ENCODE measurements at regions of chr6 and their contacts with region 1.

Region 1: GRCh38 chr6:85354761-85355618 is 94.9 kb upstream of the NT5E start:
- DNase-seq: peak; percentile 78
- H3K4me3 ChIP-seq: no peak overlapping the region
- H3K27ac ChIP-seq: no peak overlapping the region
- H3K4me1 ChIP-seq: no peaks in the 10 kb centered on the region
- H3K27me3 ChIP-seq: no peaks in the 10 kb centered on the region
- CTCF ChIP-seq: peak; percentile 80 to 92
- POLR2A ChIP-seq: no peak

Region 2: DNA sequence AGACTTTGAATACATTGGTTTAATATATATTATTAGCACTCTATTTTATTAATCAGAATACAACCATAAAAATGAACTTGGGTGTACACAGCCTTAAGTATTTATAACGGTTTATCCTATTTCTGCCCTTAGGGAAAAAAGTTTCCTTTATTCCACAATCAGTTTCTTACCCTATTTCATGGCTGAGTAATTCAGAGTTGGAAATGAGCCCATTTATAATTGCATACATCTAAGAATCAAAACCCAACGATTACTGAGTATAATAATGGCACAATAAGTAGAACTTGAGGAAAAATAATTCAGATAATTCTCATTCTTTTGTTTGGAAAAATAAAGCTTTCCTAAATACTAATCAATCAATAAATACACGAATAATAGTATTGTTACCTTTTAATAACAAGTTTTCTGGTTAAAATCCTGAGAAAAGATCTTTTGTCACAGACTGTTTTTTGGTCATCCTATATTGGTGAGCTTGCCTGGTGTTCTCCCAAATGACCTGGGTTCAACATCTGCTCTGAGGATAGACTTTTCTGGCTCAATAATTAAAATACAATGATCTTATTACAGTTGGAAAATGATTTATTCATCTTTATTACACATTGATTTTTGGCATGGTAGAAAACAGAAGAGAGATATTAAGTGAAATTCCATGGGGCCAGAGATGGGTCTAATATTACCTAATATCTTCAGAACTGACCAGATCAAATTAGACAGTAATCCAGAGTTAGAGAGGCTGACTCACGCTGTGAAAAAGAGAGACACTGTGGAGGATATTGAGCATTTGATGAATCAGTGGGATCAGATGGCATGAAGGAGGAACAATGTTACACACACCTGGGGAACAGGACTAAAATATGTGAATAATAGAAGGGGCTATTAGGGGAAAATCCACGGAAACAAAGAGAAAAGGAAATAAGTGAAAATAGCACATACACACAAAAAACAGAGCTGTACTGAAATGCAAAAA is 428.5 kb before region 1 on chr6:
- CTCF ChIA-PET with region 1: no interaction called
- POLR2A ChIA-PET with region 1: no interaction called
- dilution Hi-C with region 1: no loop called
- intact Hi-C with region 1: no loop called
- DNase-seq: no peak
- H3K4me3 ChIP-seq: no peak overlapping the region
- H3K27ac ChIP-seq: no peak overlapping the region
- H3K4me1 ChIP-seq: no peaks in the 10 kb centered on the region
- H3K27me3 ChIP-seq: peaks cover 4 to 11% of the 10 kb centered on the region in 2 experiments
- CTCF ChIP-seq: no peak
- POLR2A ChIP-seq: no peak

Region 3: GRCh38 chr6:85449818-85450759 is 95.1 kb after region 1 on chr6 and contains the start of gene NT5E:
- CTCF ChIA-PET with region 1: interaction called, 63 read pairs
- POLR2A ChIA-PET with region 1: no interaction called
- dilution Hi-C with region 1: loop called (anchors 25 kb)
- intact Hi-C with region 1: loop called (anchors 1 kb)
- DNase-seq: peak; percentile 79
- H3K4me3 ChIP-seq: peak within 1 kb of the TSS; percentile 61 to 86 (median 69)
- H3K27ac ChIP-seq: peak within 1 kb of the TSS; percentile 84
- H3K4me1 ChIP-seq: peaks cover 23% of the 10 kb centered on the region
- H3K27me3 ChIP-seq: no peaks in the 10 kb centered on the region
- CTCF ChIP-seq: peak in 1 of 2 donors; percentile 1
- POLR2A ChIP-seq: peak; percentile 72
- total RNA-seq, gene NT5E: 48.2 and 115 TPM in 2 replicates

Region 4: DNA sequence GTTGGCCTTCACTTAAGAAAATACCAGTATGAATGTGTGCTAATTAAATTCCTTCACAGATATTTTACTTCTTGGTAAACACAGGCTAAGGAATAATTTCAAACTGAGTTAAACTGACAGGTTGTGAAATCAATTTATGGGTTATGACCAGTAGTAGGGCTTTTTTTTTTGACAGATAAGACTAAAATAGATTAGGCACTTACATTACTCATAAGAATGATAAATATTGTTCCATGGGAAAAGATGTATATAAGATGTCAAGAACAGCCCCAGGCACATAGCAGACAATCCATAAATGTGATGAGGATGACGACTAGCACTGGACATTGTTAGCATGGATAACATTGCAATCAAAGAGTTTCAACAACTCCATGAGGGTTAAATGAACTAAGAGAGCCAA is 117.8 kb after region 1 on chr6:
- CTCF ChIA-PET with region 1: interaction called, 11 read pairs
- POLR2A ChIA-PET with region 1: no interaction called
- dilution Hi-C with region 1: loop called (anchors 25 kb)
- intact Hi-C with region 1: no loop called
- DNase-seq: no peak
- H3K4me3 ChIP-seq: no peak overlapping the region
- H3K27ac ChIP-seq: no peak overlapping the region
- H3K4me1 ChIP-seq: peaks cover 5% of the 10 kb centered on the region
- H3K27me3 ChIP-seq: no peaks in the 10 kb centered on the region
- CTCF ChIP-seq: no peak
- POLR2A ChIP-seq: no peak

Region 5: DNA sequence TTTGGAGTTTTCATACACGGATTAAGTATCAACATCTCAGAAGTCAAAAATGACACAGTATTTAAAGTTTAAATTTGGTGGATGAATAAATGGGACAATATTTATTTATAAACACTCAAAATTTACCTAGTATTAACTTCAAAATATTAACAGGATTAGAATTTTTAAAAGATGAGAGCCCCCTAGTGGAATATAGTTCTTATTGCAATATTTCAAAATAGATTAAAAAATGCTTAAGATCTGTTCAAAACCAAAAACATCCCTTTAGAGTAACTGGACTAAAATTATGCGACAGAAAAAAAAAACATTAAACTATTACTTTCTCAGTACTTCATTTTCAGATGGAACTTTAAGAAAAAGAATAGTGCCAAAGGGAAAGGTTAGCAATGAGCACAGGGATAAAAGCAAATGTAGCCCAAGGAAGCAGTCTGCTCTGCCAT is 182.1 kb after region 1 on chr6:
- CTCF ChIA-PET with region 1: interaction called, 49 read pairs
- POLR2A ChIA-PET with region 1: no interaction called
- dilution Hi-C with region 1: no loop called
- intact Hi-C with region 1: loop called (anchors 1 kb)
- DNase-seq: peak; percentile 32
- H3K4me3 ChIP-seq: no peak overlapping the region
- H3K27ac ChIP-seq: no peak overlapping the region
- H3K4me1 ChIP-seq: no peaks in the 10 kb centered on the region
- H3K27me3 ChIP-seq: no peaks in the 10 kb centered on the region
- CTCF ChIP-seq: peak in 1 of 2 donors; percentile 34
- POLR2A ChIP-seq: no peak

Region 6: GRCh38 chr6:85642774-85643536 is 288.0 kb after region 1 on chr6 and contains the start of gene SYNCRIP:
- CTCF ChIA-PET with region 1: no interaction called
- POLR2A ChIA-PET with region 1: no interaction called
- dilution Hi-C with region 1: no loop called
- intact Hi-C with region 1: loop called (anchors 1 kb)
- DNase-seq: peak; percentile 99
- H3K4me3 ChIP-seq: peak within 1 kb of the TSS; percentile 87 to 91 (median 90)
- H3K27ac ChIP-seq: peak within 1 kb of the TSS; percentile 100
- H3K4me1 ChIP-seq: peaks cover 27% of the 10 kb centered on the region
- H3K27me3 ChIP-seq: no peaks in the 10 kb centered on the region
- CTCF ChIP-seq: no peak
- POLR2A ChIP-seq: peak; percentile 97
- total RNA-seq, gene SYNCRIP: 150 and 155 TPM in 2 replicates